ENCODE measurements at regions of chr2 and their contacts with region 1.

Region 1: GRCh38 chr2:235577404-235578330 is 83.8 kb downstream of the AGAP1 start:
- DNase-seq: peak; percentile 44 to 69 (median 59)
- H3K4me3 ChIP-seq: no peak overlapping the region
- H3K27ac ChIP-seq: no peak overlapping the region
- H3K4me1 ChIP-seq: peaks cover 3% of the 10 kb centered on the region
- H3K27me3 ChIP-seq: no peaks in the 10 kb centered on the region
- CTCF ChIP-seq: no peak
- EP300 ChIP-seq: no peak
- POLR2A ChIP-seq: no peak

Region 2: DNA sequence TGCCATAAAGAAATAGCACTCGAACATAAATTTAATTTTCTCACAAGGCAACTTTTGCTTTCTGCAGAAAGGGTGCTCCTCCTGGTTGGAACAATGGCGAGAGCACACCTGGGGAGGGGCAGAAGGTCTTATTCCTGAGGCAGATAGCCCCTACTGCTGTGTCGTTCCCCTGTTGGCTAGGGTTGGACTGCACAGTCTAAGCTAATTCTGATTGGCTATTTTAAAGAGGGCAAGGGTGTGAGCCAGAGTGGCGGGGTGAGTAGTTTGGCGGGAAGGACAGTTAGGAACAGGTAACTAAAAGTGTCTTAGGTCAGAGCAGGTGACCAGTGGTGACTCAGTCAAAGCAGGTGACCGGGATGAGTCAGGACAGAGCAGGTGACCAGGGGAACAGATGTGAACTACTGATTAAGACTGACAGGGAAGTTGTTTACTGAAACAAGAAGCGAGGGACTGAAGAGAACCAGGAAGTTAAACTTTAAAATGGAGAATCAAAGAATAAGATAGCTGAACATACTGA is 133.5 kb before region 1 on chr2:
- intact Hi-C with region 1: no loop called
- DNase-seq: no peak
- H3K4me3 ChIP-seq: no peak overlapping the region
- H3K27ac ChIP-seq: no peak overlapping the region
- H3K4me1 ChIP-seq: no peaks in the 10 kb centered on the region
- H3K27me3 ChIP-seq: no peaks in the 10 kb centered on the region
- CTCF ChIP-seq: no peak
- EP300 ChIP-seq: no peak
- POLR2A ChIP-seq: no peak

Region 3: GRCh38 chr2:235500761-235501672 is 76.7 kb before region 1 on chr2:
- intact Hi-C with region 1: loop called in 2 of 4 experiments (anchors 10 kb)
- DNase-seq: no peak
- H3K4me3 ChIP-seq: no peak overlapping the region
- H3K27ac ChIP-seq: no peak overlapping the region
- H3K4me1 ChIP-seq: peaks cover 5% of the 10 kb centered on the region
- H3K27me3 ChIP-seq: no peaks in the 10 kb centered on the region
- CTCF ChIP-seq: no peak
- EP300 ChIP-seq: no peak
- POLR2A ChIP-seq: no peak

Region 4: GRCh38 chr2:236562434-236562833 is 984.8 kb after region 1 on chr2:
- intact Hi-C with region 1: loop called in 1 of 4 experiments (anchors 5 kb)
- DNase-seq: peak in 1 of 5 donors; percentile 32
- H3K4me3 ChIP-seq: no peak overlapping the region
- H3K27ac ChIP-seq: no peak overlapping the region
- H3K4me1 ChIP-seq: peaks cover 2% of the 10 kb centered on the region
- H3K27me3 ChIP-seq: no peaks in the 10 kb centered on the region
- CTCF ChIP-seq: peak; percentile 36 to 52 (median 47)
- EP300 ChIP-seq: no peak
- POLR2A ChIP-seq: no peak

Measured in ovary (tissue), 10 donors.